GM10248 (cell line): ENCODE measurements at regions of chr18 and their contacts with region 1.

Region 1: DNA sequence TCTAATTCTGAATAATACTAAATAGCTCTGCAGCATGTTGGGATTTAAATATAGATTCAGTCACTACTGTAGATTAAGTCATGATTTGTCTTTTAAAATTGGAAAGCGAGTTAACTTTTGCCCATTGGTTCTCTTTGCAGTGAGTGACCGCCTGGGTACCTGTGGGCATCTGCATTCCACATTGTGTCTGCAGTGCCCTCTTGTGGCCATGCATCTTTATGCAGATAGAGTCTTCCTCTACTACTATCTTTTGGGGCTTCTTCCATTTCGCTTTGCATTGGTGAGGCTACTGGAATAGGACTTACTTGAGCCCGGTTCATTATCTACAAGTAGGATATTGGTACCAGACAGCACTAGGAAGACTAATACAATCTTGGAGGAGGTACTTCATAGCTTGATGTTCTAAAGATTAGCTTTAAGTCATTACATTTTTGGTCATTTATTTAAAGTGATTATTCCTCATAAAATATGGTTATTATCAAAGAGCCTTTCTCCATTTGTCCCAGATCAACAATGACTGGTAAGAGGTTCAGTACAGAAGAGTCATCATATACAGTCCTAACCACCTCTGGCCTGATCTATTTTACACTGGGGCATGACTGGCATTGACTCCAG is 203.0 kb downstream of the SOCS6 start:
- DNase-seq: peak; percentile 41
- CTCF ChIP-seq: peak; percentile 93

Region 2: DNA sequence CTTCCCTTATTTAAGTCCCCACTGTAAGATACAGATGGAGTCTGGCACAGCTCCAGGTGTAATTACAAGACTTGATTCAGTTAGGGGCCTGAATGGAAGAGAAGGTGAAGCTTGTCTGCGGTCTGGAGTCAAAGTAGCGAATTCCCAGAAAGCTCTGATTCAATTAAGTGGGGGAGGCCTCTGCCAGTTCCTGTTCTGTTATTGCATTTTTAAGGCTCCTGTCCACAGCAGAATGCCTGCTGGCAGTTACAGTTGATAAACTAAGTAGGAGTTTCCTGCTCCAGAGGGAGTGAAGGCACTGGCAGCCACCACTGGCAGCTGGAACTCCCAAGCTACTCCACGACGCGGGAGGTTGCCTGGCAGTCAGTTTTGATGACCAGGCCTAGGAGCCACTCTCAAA is 21.9 kb before region 1 on chr18:
- CTCF ChIA-PET with region 1: interaction called, 11 read pairs
- POLR2A ChIA-PET with region 1: no interaction called
- DNase-seq: no peak
- CTCF ChIP-seq: no peak

Region 3: DNA sequence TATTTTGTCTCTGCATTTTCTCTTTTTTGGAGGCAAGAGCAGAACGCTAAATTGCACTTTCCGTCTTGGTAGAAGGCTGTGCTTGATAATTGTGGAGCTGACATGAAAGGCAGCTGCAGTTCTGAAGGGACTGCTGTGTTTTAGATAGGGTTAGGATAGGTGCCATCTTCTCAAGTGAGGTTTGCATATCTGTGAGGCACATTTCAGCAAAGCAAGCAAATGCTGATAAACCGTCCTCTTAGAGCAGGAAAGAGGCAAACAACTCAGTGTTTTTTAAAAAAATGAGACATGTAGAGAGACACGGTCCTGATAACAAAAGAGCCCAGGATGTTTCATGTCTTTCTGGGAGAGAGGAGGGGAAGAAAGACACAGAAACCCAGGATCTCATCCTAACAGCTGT is 14.7 kb after region 1 on chr18:
- CTCF ChIA-PET with region 1: interaction called, 42 read pairs
- POLR2A ChIA-PET with region 1: no interaction called
- DNase-seq: no peak
- CTCF ChIP-seq: no peak

Region 4: GRCh38 chr18:70553245-70553935 is 61.5 kb after region 1 on chr18:
- CTCF ChIA-PET with region 1: no interaction called
- POLR2A ChIA-PET with region 1: no interaction called
- DNase-seq: no peak
- CTCF ChIP-seq: no peak